ENCODE measurements at regions of chr20 and their contacts with region 1.

Region 1: DNA sequence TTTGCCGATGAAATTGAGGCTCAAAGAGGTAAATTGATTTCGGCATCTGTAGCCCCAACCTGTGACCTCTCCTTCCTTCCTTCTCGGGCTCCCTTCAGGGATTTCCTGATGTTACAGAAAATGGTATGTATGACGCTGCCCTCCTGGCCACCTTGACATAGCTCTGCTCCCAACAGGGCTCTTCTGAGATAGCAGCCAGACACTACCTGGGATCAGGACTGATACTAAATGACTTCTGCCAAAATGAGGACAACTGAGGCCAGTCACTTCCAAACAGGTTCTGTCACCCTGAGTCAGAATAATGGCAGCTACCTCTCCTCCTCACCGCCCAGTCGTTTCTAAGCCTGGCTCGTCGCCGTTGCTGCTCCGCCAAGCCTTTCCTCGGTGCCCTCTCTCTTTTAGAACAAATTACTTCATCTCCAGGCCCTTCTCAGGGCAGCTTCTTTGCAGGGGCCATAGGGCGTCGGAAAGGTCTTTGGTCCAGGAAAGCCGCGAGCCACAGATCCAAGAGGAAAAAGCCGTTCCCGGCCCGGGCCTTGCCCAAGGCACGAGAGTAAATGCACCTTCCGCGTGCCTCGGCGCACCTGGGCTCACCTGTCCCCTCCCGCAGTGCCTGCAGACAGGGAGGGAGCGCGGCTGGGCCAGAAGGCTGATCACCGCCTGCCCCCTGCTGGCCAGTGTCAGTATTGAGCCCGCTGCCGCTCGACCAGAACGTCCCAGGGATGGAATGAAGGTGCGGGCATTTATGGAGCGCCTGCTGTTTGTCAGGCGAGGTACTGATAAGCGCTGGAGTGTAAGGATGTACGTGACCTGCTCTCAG is 904 bp upstream of the LPIN3 start:
- DNase-seq: peak; percentile 89

Region 2: DNA sequence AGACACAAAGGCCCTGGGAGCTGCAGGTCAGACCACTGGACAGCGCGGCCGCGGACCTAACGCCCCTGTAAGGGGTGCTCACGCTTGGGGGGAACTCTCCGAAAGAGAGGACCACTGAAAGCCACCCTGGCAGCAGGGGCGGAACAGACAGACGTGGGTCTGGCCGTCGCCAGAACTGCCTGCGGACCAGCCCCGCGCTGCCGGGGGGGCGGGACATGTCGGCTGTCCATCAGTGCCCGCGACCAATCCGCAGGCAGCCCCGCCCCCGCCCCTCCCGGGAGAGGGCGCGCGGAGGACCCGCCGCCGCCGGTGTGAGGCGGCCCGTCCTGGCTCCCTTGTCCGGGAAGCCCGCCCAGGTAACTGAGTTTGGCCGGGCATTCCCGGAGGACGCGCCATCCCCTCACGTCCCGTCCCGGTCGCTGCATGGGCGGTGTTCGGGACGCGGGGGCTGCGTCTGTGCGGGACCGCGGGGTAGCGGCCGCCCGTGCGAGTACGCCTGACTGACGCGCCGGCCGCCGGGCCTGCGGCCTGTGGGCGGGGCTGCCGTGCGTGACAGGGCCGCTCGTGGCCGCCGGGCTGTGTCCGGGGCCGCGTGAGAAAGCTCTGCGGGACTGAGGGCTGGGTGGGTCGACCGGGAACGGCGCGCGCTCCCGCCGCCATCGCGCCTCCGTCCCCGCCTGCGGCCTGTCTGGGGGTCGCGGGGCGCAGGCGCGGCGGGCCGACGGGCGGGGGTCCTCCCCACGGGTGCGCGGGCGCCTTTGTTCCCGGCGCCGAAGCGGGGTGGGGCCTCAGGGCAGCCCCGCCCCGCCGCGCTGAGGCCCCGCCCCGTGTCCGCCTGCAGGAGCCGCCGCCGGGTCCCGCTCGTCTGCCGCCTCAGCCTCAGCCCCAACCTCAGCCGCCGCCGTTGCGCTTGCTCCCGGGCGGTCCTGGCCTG is 202.8 kb before region 1 on chr20 and contains the start of gene PLCG1:
- intact Hi-C with region 1: loop called (anchors 2 kb)
- DNase-seq: peak; percentile 94
- total RNA-seq, gene PLCG1: 66.6 TPM

Region 3: GRCh38 chr20:41232973-41233926 is 106.5 kb before region 1 on chr20:
- intact Hi-C with region 1: loop called (anchors 5 kb)
- DNase-seq: no peak

Region 4: GRCh38 chr20:41249406-41250281 is 90.1 kb before region 1 on chr20:
- intact Hi-C with region 1: loop called (anchors 5 kb)
- DNase-seq: peak; percentile 82

Region 5: GRCh38 chr20:41411391-41411847 is 71.7 kb after region 1 on chr20:
- intact Hi-C with region 1: loop called (anchors 2 kb)
- DNase-seq: no peak

Region 6: DNA sequence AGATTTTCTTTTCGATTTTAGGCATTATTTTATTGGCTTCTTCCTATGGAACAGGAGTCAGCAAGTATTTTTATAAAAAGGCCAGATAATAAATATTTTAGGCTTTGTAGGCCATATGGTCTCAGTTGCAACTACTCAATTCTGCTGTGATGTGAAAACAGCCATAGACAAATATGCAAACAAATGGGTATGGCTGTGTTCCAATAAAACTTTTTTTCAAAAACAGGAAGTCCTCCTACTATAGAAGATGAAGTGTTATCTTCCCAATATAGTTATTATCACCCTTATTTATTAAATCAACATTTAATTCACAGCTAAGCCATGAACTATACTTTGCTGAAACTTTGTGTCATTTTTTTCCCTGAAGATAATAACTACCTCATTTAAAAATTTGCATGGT is 221.3 kb after region 1 on chr20:
- intact Hi-C with region 1: no loop called
- DNase-seq: no peak

Measured in cardiac septum (tissue), 1 donor.